PC-3 (cell line): ENCODE measurements at regions of chr5 and their contacts with region 1.

Region 1: DNA sequence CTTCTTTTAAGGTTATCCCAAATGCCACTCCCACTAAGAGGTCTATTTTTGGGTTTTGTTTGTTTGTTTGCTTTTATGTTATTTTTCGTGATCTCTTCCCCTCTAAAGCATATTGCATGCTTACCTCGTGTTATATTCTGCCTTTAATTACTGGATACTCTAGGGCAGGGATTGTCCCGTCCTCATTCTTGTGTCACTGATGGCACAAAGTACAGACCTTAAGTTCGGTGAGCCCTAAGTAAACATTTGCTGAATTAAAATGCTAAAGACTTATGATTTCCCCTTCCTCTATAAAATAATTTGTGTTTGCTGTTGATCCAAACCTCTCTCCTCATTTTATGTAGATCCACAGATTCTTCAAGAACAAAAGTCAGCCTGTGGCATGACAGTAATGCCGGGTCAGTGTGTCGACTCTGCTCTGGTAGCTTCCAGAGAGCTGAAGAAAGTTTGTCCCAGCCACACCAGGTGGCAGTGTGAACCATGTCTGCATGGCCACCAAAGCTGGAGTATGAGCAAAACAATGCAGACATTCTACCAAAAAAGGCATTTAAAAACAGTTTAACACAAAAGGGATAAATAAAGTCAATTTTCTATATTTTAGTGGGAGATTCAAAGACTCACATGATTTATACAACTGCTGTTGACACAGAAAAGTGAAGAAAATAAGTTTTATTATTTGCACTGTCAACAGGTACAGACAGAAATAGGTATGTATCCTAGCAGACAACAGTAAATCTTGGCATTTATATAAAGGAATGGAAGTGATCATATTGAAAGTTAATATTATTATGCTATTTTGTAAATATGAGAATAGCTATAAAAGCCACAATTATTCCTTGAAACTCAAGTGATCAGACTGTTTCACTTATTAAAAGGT is 17.9 kb upstream of the POC5 start:
- DNase-seq: peak; percentile 46
- ATAC-seq: peak; percentile 94
- H3K4me3 ChIP-seq: no peak overlapping the region
- H3K27ac ChIP-seq: no peak overlapping the region
- H3K4me1 ChIP-seq: no peaks in the 10 kb centered on the region
- H3K27me3 ChIP-seq: peaks cover 8% of the 10 kb centered on the region; the same call in 1 of the 2 replicates
- CTCF ChIP-seq: peak; percentile 66

Region 2: DNA sequence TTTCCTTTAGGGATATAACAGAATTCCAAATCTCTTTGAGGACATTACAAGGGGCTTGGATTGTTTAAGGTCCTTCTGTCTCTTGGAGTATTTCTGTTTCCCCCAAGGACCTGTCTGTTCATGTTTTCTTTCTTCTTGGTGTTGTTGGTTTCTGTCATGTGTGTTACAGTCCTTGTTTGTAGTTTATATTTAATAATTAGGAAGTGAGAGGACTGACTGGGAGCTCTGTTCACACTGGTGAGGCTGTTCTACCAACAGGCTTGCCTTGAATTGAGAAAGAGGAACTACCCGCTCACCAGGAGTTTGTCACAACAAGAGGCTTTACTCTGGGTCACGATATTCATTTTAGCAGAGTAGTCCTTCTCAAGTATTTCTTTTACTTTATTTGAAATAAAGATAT is 228.9 kb after region 1 on chr5:
- CTCF ChIA-PET with region 1: no interaction called
- POLR2A ChIA-PET with region 1: no interaction called
- intact Hi-C with region 1: no loop called
- DNase-seq: no peak
- ATAC-seq: no peak
- H3K4me3 ChIP-seq: no peak overlapping the region
- H3K27ac ChIP-seq: no peak overlapping the region
- H3K4me1 ChIP-seq: no peaks in the 10 kb centered on the region
- H3K27me3 ChIP-seq: no peaks in the 10 kb centered on the region; the same call in 1 of the 2 replicates
- CTCF ChIP-seq: no peak

Region 3: GRCh38 chr5:76256116-76256889 is 521.2 kb after region 1 on chr5:
- CTCF ChIA-PET with region 1: no interaction called
- POLR2A ChIA-PET with region 1: no interaction called
- intact Hi-C with region 1: loop called (anchors 1 kb)
- DNase-seq: peak; percentile 62
- ATAC-seq: peak; percentile 84
- H3K4me3 ChIP-seq: no peak overlapping the region
- H3K27ac ChIP-seq: no peak overlapping the region
- H3K4me1 ChIP-seq: no peaks in the 10 kb centered on the region
- H3K27me3 ChIP-seq: no peaks in the 10 kb centered on the region
- CTCF ChIP-seq: peak; percentile 65; the same call in 1 of the 2 replicates